SK-N-SH (cell line): ENCODE measurements at regions of chr1 and their contacts with region 1.

Region 1: DNA sequence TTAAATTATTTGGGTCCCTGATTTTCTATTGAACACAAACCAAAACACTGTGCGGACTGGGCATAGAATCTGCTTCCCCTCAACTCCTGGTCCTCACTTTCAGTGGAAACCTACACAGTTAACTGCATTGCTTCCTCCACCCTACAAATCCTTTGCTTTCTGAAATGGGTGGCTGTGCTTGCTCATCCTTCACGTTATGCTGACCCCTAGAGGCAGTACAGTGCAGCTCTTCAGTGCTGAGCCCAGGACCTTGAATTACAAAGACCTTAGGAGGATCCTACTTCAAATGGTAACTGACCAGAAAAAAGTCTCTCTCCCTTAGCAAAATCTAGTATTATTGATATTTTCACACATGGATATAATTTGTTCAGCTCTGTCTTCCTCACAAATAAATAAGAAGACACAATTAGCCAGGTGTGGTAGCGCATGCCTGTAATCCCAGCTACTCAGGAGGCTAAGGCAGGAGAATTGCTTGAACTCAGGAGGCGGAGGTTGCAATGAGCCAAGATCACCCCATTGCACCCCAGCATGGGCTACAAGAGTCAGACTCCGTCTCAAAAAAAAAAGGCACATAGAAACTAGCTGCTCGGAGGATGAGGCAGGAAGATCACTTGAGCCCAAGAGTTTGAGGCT is 63.4 kb upstream of the L1TD1 start:
- DNase-seq: peak; percentile 66
- H3K4me3 ChIP-seq: peak overlapping the region in 1 of 2 experiments; percentile 38; a peak in 1 of 4 replicates
- H3K27ac ChIP-seq: no peak overlapping the region
- H3K4me1 ChIP-seq: no peaks in the 10 kb centered on the region; a peak in 1 of 4 replicates
- H3K27me3 ChIP-seq: no peaks in the 10 kb centered on the region
- CTCF ChIP-seq: peak; percentile 73
- EP300 ChIP-seq: no peak
- RAD21 ChIP-seq: peak; percentile 75

Region 2: DNA sequence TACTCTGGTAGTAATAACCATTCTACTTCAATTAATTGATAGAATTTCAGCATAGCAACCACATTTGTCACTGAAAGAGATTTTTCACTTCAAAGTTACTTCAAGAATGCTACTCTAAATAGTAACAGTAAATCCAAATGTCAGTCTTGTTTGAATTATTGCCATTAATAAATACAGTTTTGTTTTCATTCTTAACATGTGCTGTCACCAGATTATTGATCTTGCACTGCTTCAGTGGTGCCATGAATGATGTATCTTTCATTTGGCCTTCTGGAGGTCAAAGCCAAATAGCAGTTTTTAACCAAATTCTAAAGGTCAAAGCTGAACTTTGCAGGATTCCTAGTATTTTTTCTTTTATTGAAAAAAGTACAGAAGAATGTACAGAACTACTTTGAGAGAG is 189.4 kb before region 1 on chr1:
- CTCF ChIA-PET with region 1: no interaction called
- POLR2A ChIA-PET with region 1: no interaction called
- DNase-seq: no peak
- H3K4me3 ChIP-seq: no peak overlapping the region
- H3K27ac ChIP-seq: no peak overlapping the region
- H3K4me1 ChIP-seq: no peaks in the 10 kb centered on the region
- H3K27me3 ChIP-seq: no peaks in the 10 kb centered on the region
- CTCF ChIP-seq: no peak
- EP300 ChIP-seq: no peak
- RAD21 ChIP-seq: no peak

Region 3: DNA sequence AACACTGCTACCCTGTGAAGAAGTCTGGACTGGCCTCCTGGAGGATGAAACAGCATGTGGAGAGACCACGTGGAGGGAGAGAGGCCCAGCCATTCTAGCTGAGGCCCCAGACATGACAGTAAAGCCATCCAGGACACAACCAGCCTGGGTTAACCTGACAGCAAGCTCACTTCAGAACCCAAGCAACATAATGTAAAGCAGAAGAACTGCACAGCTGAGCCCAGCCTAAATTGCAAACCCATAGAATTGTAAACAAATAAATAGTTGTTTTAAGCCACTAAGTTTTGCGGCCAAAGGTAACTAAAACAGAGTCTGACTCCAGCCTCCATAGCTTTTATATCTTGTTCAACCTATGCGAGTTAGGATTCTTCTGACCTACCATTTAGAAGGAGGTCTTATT is 33.7 kb before region 1 on chr1:
- CTCF ChIA-PET with region 1: no interaction called
- POLR2A ChIA-PET with region 1: no interaction called
- DNase-seq: no peak
- H3K4me3 ChIP-seq: no peak overlapping the region
- H3K27ac ChIP-seq: no peak overlapping the region
- H3K4me1 ChIP-seq: no peaks in the 10 kb centered on the region
- H3K27me3 ChIP-seq: no peaks in the 10 kb centered on the region
- CTCF ChIP-seq: no peak
- EP300 ChIP-seq: no peak
- RAD21 ChIP-seq: no peak

Region 4: DNA sequence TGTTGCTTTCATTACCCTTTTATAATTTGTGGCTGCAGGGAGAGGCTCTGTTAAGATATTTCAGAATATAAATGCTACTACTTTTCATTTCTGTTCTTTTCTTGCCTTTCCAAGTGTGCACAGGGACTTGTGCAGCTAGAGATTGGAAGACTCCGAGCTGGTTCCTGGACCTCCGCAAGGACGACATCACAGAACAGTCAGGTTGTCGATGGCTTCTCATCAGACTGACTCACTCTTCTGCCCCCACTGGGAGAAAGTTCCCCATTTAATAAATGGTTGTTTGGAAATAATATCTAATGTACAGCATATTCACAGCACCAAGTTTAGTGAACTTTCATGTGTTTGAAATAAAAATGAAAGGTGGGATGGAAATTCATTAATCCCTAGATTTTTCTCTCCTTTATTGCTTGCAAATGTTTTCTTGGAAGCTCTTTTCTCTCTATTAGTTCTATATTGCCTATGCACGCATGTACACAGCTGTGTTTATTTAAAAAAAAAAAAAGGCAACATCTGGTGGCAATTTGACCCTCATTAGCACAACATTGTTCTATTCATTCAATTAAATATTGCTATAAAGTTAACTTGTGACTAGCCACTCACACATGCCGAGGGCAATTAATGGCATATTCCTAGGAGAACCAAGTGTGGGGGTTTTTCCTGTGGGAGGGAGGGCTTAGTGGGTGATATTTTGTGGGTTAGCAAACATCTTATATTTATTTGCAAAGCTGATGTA is 14.0 kb before region 1 on chr1:
- CTCF ChIA-PET with region 1: interaction called, 14 read pairs
- POLR2A ChIA-PET with region 1: no interaction called
- DNase-seq: no peak
- H3K4me3 ChIP-seq: no peak overlapping the region
- H3K27ac ChIP-seq: no peak overlapping the region
- H3K4me1 ChIP-seq: peaks cover 0 to 3% of the 10 kb centered on the region in 2 experiments; a peak in 1 of 4 replicates
- H3K27me3 ChIP-seq: no peaks in the 10 kb centered on the region
- CTCF ChIP-seq: no peak
- EP300 ChIP-seq: peak in 1 of 2 experiments; percentile 30; a peak in 1 of 4 replicates
- RAD21 ChIP-seq: no peak

Region 5: DNA sequence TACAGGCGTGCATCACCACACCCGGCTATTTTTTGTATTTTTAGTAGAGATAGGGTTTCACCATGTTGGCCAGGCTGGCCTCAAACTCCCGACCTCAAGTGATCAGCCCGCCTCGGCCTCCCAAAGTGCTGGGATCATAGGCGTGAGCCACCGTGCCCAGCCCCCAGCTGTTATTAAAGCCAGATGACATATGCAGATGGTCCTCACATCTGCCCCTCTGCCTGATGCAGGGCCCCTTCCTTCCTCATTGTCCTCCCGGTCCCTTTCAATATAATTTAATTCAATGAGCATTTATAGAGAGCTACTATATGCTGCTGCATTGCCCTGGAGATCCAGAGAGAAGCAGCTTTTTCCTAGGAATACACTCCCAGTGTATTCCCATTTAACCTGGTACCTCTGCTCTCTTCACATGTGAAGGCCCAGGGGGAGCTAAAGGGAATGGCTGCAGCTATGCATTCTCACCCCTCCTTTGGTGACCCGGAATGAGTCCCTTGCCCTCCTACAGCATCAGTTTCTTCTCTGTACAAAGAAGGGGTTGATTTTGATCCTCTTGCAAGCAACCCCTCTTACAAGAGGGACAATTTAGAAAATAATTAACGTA is 119.0 kb after region 1 on chr1:
- CTCF ChIA-PET with region 1: no interaction called
- POLR2A ChIA-PET with region 1: no interaction called
- DNase-seq: peak; percentile 62
- H3K4me3 ChIP-seq: no peak overlapping the region
- H3K27ac ChIP-seq: peak overlapping the region in 1 of 2 experiments; percentile 61; a peak in 1 of 4 replicates
- H3K4me1 ChIP-seq: peaks cover 0 to 3% of the 10 kb centered on the region in 2 experiments; a peak in 1 of 4 replicates
- H3K27me3 ChIP-seq: no peaks in the 10 kb centered on the region
- CTCF ChIP-seq: no peak
- EP300 ChIP-seq: no peak; a peak in 1 of 4 replicates
- RAD21 ChIP-seq: peak; percentile 26; the same call in 1 of the 2 replicates